ENCODE measurements at regions of chr5 and their contacts with region 1.

Region 1: GRCh38 chr5:139696894-139697658 is 48.9 kb downstream of the CXXC5 start:
- DNase-seq: peak; percentile 70
- ATAC-seq: peak; percentile 51
- H3K4me3 ChIP-seq: peak overlapping the region; percentile 54 to 74 (median 66); a peak in 5 of 6 replicates
- H3K27ac ChIP-seq: peak overlapping the region; percentile 83
- H3K4me1 ChIP-seq: peaks cover 88% of the 10 kb centered on the region
- H3K27me3 ChIP-seq: no peaks in the 10 kb centered on the region
- CTCF ChIP-seq: no peak
- EP300 ChIP-seq: no peak
- POLR2A ChIP-seq: peak; percentile 36 to 59
- RAD21 ChIP-seq: 0 out of 2 replicates have a peak, but pooled peaks have one; percentile 9

Region 2: DNA sequence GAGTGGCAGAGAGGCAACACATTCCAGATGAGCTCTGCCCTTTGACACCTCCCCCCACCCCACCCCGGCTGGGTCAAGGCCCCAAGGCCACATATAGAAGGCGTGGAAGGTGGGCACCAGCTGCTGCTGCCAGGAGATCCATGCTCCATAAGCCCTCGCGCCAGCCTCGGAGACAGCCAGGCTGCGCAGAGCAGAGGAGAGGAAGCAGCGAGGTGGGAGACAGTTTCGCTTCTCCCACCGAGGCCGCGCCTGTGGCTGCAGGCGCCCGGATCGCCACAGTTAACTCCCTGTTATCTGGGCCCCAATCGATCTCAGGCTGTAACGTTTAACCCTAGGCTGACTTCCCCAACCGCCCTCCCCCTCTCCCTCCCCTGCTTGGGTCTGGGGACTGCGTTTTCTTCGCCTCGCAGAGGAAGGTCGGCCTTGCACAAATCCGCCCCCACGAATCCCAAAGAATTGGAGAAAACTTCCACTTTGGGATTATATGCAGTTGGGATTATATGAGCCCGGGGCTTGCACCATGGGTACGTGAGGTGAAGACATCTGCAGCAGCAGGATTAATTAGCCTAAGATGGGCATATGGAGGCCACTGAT is 50.1 kb before region 1 on chr5:
- CTCF ChIA-PET with region 1: no interaction called
- POLR2A ChIA-PET with region 1: interaction called, 21 read pairs
- in situ Hi-C with region 1: no loop called
- intact Hi-C with region 1: no loop called
- DNase-seq: no peak
- ATAC-seq: peak; percentile 2; the same call in 2 of the 3 replicates
- H3K4me3 ChIP-seq: peak overlapping the region; percentile 74 to 95 (median 91)
- H3K27ac ChIP-seq: no peak overlapping the region
- H3K4me1 ChIP-seq: peaks cover 67% of the 10 kb centered on the region
- H3K27me3 ChIP-seq: no peaks in the 10 kb centered on the region; a peak in 1 of 5 replicates
- CTCF ChIP-seq: no peak
- EP300 ChIP-seq: no peak
- POLR2A ChIP-seq: no peak
- RAD21 ChIP-seq: no peak

Region 3: DNA sequence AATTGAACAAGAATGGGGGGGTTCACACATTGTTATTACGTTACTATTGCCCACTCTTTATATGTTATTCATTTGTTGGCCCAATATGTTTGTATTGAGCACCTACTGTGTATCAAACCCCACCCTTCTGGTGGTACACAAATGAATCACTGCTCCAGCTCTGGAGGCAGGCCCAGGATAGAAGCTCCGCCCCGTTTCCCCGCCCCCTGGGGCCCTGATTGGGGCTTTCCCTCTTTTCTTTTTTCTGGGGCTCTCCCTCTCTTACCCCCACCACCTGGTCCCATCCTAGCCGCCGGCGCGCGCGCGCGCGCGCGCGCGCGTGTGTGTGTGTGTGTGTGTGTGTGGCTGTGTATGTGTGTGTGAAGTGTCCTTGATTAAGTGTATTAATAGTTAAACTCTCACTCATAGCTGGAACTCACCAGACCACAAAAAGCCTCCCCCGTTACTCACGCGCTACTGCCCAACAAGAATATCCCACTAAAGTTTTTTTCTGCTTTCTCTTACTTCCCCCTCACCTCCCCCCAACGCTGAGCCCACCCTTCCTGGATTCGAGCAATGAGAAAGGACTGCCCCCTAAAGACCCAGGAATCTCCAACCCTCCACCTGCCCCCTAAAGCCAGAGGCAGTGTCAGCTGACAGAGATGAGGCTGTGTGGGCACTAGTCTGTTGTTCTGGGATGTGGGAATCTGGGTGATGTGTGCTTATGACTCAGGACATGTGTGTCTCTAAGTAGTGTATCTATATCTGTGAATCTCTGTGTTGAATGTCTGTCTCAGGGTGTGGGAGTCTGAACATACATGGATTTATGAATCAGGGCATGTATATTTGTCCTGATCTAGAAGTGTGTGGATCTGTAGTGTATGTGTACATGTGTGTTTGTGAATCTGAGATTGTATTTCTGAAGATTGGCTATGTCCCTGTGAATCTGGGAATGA is 45.0 kb before region 1 on chr5:
- CTCF ChIA-PET with region 1: no interaction called
- POLR2A ChIA-PET with region 1: interaction called, 21 read pairs
- in situ Hi-C with region 1: no loop called
- intact Hi-C with region 1: no loop called
- DNase-seq: no peak
- ATAC-seq: no peak
- H3K4me3 ChIP-seq: peak overlapping the region; percentile 41 to 74 (median 57); a peak in 4 of 6 replicates
- H3K27ac ChIP-seq: peak overlapping the region; percentile 49
- H3K4me1 ChIP-seq: peaks cover 67% of the 10 kb centered on the region
- H3K27me3 ChIP-seq: no peaks in the 10 kb centered on the region; a peak in 1 of 5 replicates
- CTCF ChIP-seq: no peak
- EP300 ChIP-seq: no peak
- POLR2A ChIP-seq: no peak
- RAD21 ChIP-seq: no peak

Region 4: GRCh38 chr5:139711067-139711905 is 14.2 kb after region 1 on chr5:
- CTCF ChIA-PET with region 1: no interaction called
- POLR2A ChIA-PET with region 1: interaction called, 31 read pairs
- in situ Hi-C with region 1: no loop called
- intact Hi-C with region 1: no loop called
- DNase-seq: no peak
- ATAC-seq: peak; percentile 7
- H3K4me3 ChIP-seq: peak overlapping the region; percentile 52 to 74 (median 56); a peak in 5 of 6 replicates
- H3K27ac ChIP-seq: peak overlapping the region; percentile 46
- H3K4me1 ChIP-seq: peaks cover 58% of the 10 kb centered on the region
- H3K27me3 ChIP-seq: no peaks in the 10 kb centered on the region
- CTCF ChIP-seq: peak; percentile 47
- EP300 ChIP-seq: no peak
- POLR2A ChIP-seq: no peak
- RAD21 ChIP-seq: no peak

Region 5: DNA sequence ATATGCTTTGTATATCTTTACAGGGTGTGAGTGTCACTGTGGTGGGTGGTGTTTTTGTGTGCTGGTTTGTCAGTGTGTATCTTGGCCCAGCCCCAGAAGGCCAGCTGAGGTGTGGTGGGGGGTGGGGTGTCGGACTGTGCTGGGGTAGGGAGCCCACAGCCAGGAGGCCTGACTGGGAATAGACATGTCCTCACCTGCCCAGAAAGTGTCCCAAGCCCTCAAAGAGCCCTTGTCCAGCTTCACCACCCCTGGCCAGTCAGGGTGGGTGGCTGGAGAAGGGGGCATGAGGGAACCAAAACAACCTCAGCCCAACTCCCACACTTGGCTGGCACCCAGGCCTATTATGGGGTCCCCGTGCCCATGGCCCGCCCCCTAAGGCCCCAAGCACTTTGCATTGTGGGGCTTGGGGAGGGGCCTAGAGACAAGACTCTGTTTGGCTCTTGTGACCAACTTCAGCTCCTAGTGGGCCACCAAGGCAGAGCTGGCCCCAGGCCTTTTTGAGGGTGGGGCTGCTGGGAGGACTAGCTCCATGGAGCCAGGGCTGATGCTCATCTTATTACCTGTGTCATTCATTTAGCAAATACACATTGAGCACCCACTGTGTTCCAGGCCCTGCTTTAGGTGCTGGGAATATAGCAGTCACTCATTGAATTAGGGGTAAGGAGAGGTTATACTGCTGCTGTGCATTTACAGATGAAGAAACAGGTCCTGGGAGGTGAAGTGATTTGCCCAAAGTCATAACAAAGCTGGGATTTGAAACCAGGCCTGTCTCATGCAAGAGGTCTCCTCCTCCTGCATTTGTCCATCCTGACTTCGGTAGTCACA is 42.3 kb after region 1 on chr5:
- CTCF ChIA-PET with region 1: no interaction called
- POLR2A ChIA-PET with region 1: interaction called, 77 read pairs
- in situ Hi-C with region 1: no loop called
- intact Hi-C with region 1: loop called (anchors 5 kb)
- DNase-seq: peak; percentile 54
- ATAC-seq: peak; percentile 19
- H3K4me3 ChIP-seq: peak overlapping the region in 1 of 3 experiments; percentile 44; a peak in 1 of 6 replicates
- H3K27ac ChIP-seq: peak overlapping the region; percentile 59
- H3K4me1 ChIP-seq: peaks cover 77% of the 10 kb centered on the region
- H3K27me3 ChIP-seq: no peaks in the 10 kb centered on the region
- CTCF ChIP-seq: no peak
- EP300 ChIP-seq: peak in 1 of 2 experiments; percentile 25; a peak in 1 of 4 replicates
- POLR2A ChIP-seq: no peak
- RAD21 ChIP-seq: no peak

Region 6: DNA sequence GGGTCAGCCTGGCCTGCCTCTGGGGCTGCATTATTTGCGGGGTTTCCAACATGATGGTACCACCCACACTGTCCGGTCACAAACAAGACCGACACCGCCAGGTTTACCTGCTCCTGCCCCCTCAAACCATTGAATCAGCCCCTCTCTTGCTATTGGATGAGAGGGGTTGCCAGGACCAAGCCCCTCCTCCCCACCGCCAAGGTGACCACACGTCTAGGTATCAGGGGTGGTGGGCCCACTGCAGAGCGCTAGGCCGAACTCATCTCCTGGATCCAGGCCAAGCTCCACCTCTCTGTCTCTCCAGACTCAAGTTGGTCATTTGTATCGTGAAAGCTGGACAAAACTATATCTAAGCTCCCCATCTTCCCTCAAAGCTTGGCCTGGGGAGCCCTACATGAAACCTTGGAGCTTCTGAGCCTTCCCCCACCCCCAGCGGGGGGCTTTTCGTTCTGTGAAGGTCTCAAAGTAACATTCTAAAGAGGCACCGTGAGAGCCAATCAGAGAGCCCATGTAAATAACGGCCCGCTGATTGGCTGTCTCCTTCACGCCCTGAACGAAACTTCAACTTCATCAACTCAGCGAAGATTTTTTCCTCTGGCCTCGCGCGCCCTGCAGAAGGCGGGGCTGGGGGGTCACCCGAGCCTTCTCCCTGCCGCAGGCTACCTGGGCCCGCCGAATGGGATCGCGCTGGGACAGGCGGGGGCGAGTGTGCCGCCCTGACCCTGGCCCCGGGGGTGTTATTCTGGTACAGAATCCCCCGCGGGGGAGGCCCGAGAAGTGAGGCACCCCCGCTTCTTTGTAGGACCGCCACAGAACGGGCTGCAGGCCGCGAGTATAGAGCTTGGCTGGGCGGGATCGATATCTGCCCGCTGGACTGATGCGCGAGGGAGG is 49.0 kb after region 1 on chr5:
- CTCF ChIA-PET with region 1: no interaction called
- POLR2A ChIA-PET with region 1: interaction called, 22 read pairs
- in situ Hi-C with region 1: no loop called
- intact Hi-C with region 1: no loop called
- DNase-seq: peak; percentile 85
- ATAC-seq: peak; percentile 77
- H3K4me3 ChIP-seq: peak overlapping the region; percentile 49 to 73 (median 55); a peak in 5 of 6 replicates
- H3K27ac ChIP-seq: peak overlapping the region; percentile 14
- H3K4me1 ChIP-seq: peaks cover 88% of the 10 kb centered on the region
- H3K27me3 ChIP-seq: peaks cover 0 to 14% of the 10 kb centered on the region in 2 experiments; a peak in 2 of 5 replicates
- CTCF ChIP-seq: no peak
- EP300 ChIP-seq: no peak
- POLR2A ChIP-seq: no peak
- RAD21 ChIP-seq: no peak